ENCODE measurements at regions of chr3 and their contacts with region 1.

Region 1: GRCh38 chr3:183188895-183189462 is 26.4 kb upstream of the LAMP3 start:
- DNase-seq: no peak
- ATAC-seq: peak; percentile 44 to 61 (median 48)
- H3K4me3 ChIP-seq: no peak overlapping the region
- H3K27ac ChIP-seq: no peak overlapping the region
- H3K4me1 ChIP-seq: no peaks in the 10 kb centered on the region
- H3K27me3 ChIP-seq: no peaks in the 10 kb centered on the region
- CTCF ChIP-seq: peak in 3 of 4 donors; percentile 27 to 41 (median 38)
- POLR2A ChIP-seq: no peak

Region 2: GRCh38 chr3:183122257-183122932 is 66.6 kb before region 1 on chr3:
- intact Hi-C with region 1: loop called in 1 of 2 experiments (anchors 10 kb)
- DNase-seq: no peak
- ATAC-seq: peak; percentile 78 to 87 (median 80)
- H3K4me3 ChIP-seq: no peak overlapping the region
- H3K27ac ChIP-seq: no peak overlapping the region
- H3K4me1 ChIP-seq: no peaks in the 10 kb centered on the region
- H3K27me3 ChIP-seq: no peaks in the 10 kb centered on the region
- CTCF ChIP-seq: peak; percentile 85 to 88 (median 87)
- POLR2A ChIP-seq: no peak

Region 3: GRCh38 chr3:183233966-183234365 is 45.0 kb after region 1 on chr3:
- intact Hi-C with region 1: no loop called
- DNase-seq: no peak
- ATAC-seq: no peak
- H3K4me3 ChIP-seq: no peak overlapping the region
- H3K27ac ChIP-seq: no peak overlapping the region
- H3K4me1 ChIP-seq: no peaks in the 10 kb centered on the region
- H3K27me3 ChIP-seq: no peaks in the 10 kb centered on the region
- CTCF ChIP-seq: no peak
- POLR2A ChIP-seq: no peak

Region 4: DNA sequence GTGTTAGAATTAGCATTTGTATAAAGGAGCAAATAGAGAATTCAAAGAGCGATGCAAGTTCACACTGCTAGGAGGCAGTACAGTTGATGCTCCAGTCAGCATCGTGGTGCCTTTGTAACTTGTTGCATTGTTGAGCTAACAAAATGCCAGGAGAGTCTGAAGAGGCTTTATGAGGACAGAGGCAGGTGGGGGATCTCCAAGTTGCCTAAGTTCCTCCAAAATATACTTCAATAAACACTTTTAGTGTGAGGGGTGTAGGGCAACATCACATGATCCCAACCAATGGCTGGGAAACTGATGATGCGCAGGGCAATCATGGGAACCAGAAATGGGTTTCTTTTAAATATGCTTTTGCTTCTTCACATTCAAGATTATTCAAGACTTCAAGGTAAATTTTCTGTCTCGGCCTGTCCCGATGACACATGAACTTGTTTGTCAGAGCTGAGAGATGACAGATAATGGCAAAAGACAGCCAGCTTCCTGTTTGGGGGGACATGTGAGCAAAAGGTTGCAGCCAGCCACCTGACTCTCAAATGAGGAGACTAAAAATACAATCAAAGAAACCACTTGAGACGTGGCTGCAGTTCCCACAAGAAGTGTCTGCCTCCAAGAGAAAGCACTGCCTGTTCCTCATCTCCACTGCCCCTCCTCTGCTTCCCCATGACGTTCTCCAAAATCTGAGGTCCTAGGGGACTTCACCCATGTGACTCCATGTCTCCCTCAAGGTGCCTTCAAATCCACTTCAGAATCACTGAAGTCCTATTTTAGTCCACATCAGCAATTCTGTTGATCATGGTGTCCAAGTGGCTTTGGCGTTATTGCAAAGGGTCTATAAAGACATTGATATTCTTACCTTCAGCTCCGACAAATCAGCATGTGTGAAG is 327.2 kb after region 1 on chr3:
- intact Hi-C with region 1: no loop called
- DNase-seq: peak in 1 of 3 donors; percentile 10
- ATAC-seq: peak in 2 of 4 donors; percentile 16 to 36
- H3K4me3 ChIP-seq: no peak overlapping the region
- H3K27ac ChIP-seq: no peak overlapping the region
- H3K4me1 ChIP-seq: peaks cover 0 to 3% (median 0%) of the 10 kb centered on the region in 4 donors
- H3K27me3 ChIP-seq: no peaks in the 10 kb centered on the region
- CTCF ChIP-seq: no peak
- POLR2A ChIP-seq: no peak

Measured in right lobe of liver (tissue), 6 donors.